CD4-positive, alpha-beta memory T cell (primary cell): ENCODE measurements at regions of chr4 and their contacts with region 1.

Region 1: GRCh38 chr4:10106421-10107039 is 10.1 kb downstream of the WDR1 start:
- DNase-seq: peak in 4 of 5 donors; percentile 49 to 93 (median 58)
- H3K4me3 ChIP-seq: peak overlapping the region in 1 of 2 donors; percentile 21
- H3K4me3 Mint-ChIP-seq: peak overlapping the region; percentile 40 to 77 (median 71)
- H3K27ac ChIP-seq: peak overlapping the region; percentile 74
- H3K27ac Mint-ChIP-seq: peak overlapping the region; percentile 88 to 99 (median 91)
- H3K4me1 ChIP-seq: peaks cover 97% of the 10 kb centered on the region
- H3K4me1 Mint-ChIP-seq: peaks cover 83 to 100% (median 92%) of the 10 kb centered on the region in 4 donors
- H3K27me3 ChIP-seq: no peaks in the 10 kb centered on the region
- H3K27me3 Mint-ChIP-seq: no peaks in the 10 kb centered on the region

Region 2: GRCh38 chr4:10074767-10075105 is 31.8 kb before region 1 on chr4:
- CTCF ChIA-PET with region 1: no interaction called
- POLR2A ChIA-PET with region 1: no interaction called
- intact Hi-C with region 1: loop called (anchors 2 kb)
- DNase-seq: no peak
- H3K4me3 ChIP-seq: no peak overlapping the region
- H3K4me3 Mint-ChIP-seq: no peak overlapping the region
- H3K27ac ChIP-seq: no peak overlapping the region
- H3K27ac Mint-ChIP-seq: peak overlapping the region in 2 of 7 donors; percentile 11 to 58
- H3K4me1 ChIP-seq: no peaks in the 10 kb centered on the region
- H3K4me1 Mint-ChIP-seq: peaks cover 0 to 4% (median 2%) of the 10 kb centered on the region in 4 donors
- H3K27me3 ChIP-seq: no peaks in the 10 kb centered on the region
- H3K27me3 Mint-ChIP-seq: no peaks in the 10 kb centered on the region

Region 3: GRCh38 chr4:10096201-10096977 is 10.1 kb before region 1 on chr4:
- CTCF ChIA-PET with region 1: interaction called, 24 read pairs
- POLR2A ChIA-PET with region 1: interaction called, 49 read pairs
- intact Hi-C with region 1: loop called (anchors 1 kb)
- DNase-seq: peak; percentile 70 to 91 (median 79)
- H3K4me3 ChIP-seq: peak overlapping the region in 1 of 2 donors; percentile 28
- H3K4me3 Mint-ChIP-seq: peak overlapping the region; percentile 38 to 79 (median 64)
- H3K27ac ChIP-seq: peak overlapping the region; percentile 74
- H3K27ac Mint-ChIP-seq: peak overlapping the region; percentile 89 to 99 (median 95)
- H3K4me1 ChIP-seq: peaks cover 99% of the 10 kb centered on the region
- H3K4me1 Mint-ChIP-seq: peaks cover 65 to 100% (median 87%) of the 10 kb centered on the region in 4 donors
- H3K27me3 ChIP-seq: no peaks in the 10 kb centered on the region
- H3K27me3 Mint-ChIP-seq: no peaks in the 10 kb centered on the region